ENCODE measurements at regions of chr4 and their contacts with region 1.

Region 1: DNA sequence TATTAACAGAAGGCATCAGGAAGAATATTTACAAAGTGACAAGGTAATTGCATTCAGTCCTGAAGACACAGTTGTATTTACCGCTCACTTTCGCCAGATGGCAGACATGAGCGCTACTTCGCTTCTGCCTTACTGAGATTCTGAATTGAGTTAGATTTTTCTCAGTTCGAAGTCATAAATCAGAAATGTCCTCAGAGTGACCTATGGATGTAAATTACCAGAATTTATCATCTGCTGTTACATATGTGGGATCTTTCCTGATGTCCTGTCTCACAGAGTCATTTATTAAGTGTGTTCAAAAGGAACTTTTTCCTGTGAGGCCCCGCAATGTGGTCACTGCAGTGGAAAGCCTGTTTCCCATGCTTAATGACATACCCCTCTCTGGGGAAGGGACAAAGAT is 97.3 kb upstream of the DCLK2 start:
- DNase-seq: peak in 9 of 10 donors; percentile 22 to 70 (median 52)
- H3K4me3 ChIP-seq: no peak overlapping the region
- H3K27ac ChIP-seq: no peak overlapping the region
- H3K27me3 ChIP-seq: no peaks in the 10 kb centered on the region
- CTCF ChIP-seq: peak; percentile 52 to 88 (median 78)

Region 2: DNA sequence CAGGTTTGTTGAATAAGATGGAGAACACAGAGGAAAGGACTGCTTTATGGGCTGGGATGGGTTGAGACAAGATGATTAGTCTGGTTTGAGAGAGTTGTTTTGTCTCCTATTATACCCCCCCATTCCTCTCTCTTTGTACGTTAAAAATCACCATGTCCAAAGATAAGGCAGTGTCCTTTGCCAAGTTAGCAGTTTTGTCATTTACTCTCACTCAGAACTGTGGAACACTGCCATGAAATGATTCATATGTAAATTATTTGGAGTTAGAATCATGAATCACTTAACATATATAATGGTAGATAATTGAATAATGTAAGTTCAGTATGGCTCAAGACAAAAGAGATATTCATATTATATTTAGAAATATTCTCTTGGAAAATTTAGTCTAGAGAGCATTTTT is 248.6 kb after region 1 on chr4:
- intact Hi-C with region 1: no loop called
- DNase-seq: no peak
- H3K4me3 ChIP-seq: no peak overlapping the region
- H3K27ac ChIP-seq: peak overlapping the region in 1 of 59 donors; percentile 24
- H3K27me3 ChIP-seq: no peaks in the 10 kb centered on the region
- CTCF ChIP-seq: no peak

Region 3: GRCh38 chr4:150874338-150875226 is 893.6 kb after region 1 on chr4:
- intact Hi-C with region 1: loop called in 1 of 2 experiments (anchors 5 kb)
- DNase-seq: peak in 8 of 10 donors; percentile 27 to 69 (median 58)
- H3K4me3 ChIP-seq: no peak overlapping the region
- H3K27ac ChIP-seq: peak overlapping the region in 23 of 59 donors; percentile 2 to 62 (median 26)
- H3K27me3 ChIP-seq: no peaks in the 10 kb centered on the region
- CTCF ChIP-seq: no peak

Measured in dorsolateral prefrontal cortex (tissue), 120 donors.